Activated naive CD4-positive, alpha-beta T cell treated with anti-CD3 and anti-CD28 coated beads for 36 hours (primary cell): ENCODE measurements at regions of chr17 and their contacts with region 1.

Region 1: GRCh38 chr17:2511462-2512369 is at the start of gene METTL16:
- DNase-seq: peak; percentile 100
- H3K4me3 Mint-ChIP-seq: no peak within 1 kb of the TSS
- H3K27ac Mint-ChIP-seq: peak within 1 kb of the TSS; percentile 47
- H3K4me1 Mint-ChIP-seq: peaks cover 18% of the 10 kb centered on the region
- H3K27me3 Mint-ChIP-seq: no peaks in the 10 kb centered on the region
- total RNA-seq, gene METTL16: 44.8 to 45.5 TPM

Region 2: DNA sequence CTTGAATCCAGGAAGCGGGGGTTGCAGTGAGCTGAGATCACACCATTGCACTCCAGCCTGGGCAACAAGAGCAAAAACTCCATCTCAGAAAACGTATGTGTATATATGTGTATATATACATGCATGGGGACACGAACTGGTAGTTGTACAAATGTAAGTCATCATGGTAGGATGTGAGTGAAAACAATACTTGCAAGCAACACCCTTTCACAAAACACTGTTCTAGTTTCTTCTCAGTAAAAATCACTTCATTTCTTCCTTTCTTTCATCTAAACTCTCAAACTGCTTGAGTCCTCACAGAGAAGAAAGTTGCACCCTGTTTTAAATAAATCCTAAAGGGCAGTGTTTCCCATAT is 51.8 kb before region 1 on chr17:
- CTCF ChIA-PET with region 1: no interaction called
- intact Hi-C with region 1: loop called (anchors 2 kb)
- DNase-seq: no peak
- H3K4me3 Mint-ChIP-seq: no peak overlapping the region
- H3K27ac Mint-ChIP-seq: peak overlapping the region; percentile 68
- H3K4me1 Mint-ChIP-seq: peaks cover 27% of the 10 kb centered on the region
- H3K27me3 Mint-ChIP-seq: no peaks in the 10 kb centered on the region

Region 3: GRCh38 chr17:2672026-2672425 is 160.3 kb after region 1 on chr17:
- CTCF ChIA-PET with region 1: no interaction called
- intact Hi-C with region 1: loop called (anchors 1 kb)
- DNase-seq: no peak
- H3K4me3 Mint-ChIP-seq: no peak overlapping the region
- H3K27ac Mint-ChIP-seq: no peak overlapping the region
- H3K4me1 Mint-ChIP-seq: peaks cover 6% of the 10 kb centered on the region
- H3K27me3 Mint-ChIP-seq: no peaks in the 10 kb centered on the region

Region 4: GRCh38 chr17:2711601-2712299 is 200.0 kb after region 1 on chr17 and contains the start of gene CLUH:
- CTCF ChIA-PET with region 1: no interaction called
- intact Hi-C with region 1: loop called (anchors 1 kb)
- DNase-seq: peak; percentile 96
- H3K4me3 Mint-ChIP-seq: peak within 1 kb of the TSS; percentile 88
- H3K27ac Mint-ChIP-seq: peak within 1 kb of the TSS; percentile 82
- H3K4me1 Mint-ChIP-seq: peaks cover 32% of the 10 kb centered on the region
- H3K27me3 Mint-ChIP-seq: no peaks in the 10 kb centered on the region
- total RNA-seq, gene CLUH: 72.7 to 81.4 TPM

Region 5: GRCh38 chr17:2926019-2926650 is 414.4 kb after region 1 on chr17:
- CTCF ChIA-PET with region 1: no interaction called
- intact Hi-C with region 1: no loop called
- DNase-seq: no peak
- H3K4me3 Mint-ChIP-seq: no peak overlapping the region
- H3K27ac Mint-ChIP-seq: no peak overlapping the region
- H3K4me1 Mint-ChIP-seq: peaks cover 5% of the 10 kb centered on the region
- H3K27me3 Mint-ChIP-seq: no peaks in the 10 kb centered on the region